ENCODE measurements at regions of chr14 and their contacts with region 1.

Region 1: DNA sequence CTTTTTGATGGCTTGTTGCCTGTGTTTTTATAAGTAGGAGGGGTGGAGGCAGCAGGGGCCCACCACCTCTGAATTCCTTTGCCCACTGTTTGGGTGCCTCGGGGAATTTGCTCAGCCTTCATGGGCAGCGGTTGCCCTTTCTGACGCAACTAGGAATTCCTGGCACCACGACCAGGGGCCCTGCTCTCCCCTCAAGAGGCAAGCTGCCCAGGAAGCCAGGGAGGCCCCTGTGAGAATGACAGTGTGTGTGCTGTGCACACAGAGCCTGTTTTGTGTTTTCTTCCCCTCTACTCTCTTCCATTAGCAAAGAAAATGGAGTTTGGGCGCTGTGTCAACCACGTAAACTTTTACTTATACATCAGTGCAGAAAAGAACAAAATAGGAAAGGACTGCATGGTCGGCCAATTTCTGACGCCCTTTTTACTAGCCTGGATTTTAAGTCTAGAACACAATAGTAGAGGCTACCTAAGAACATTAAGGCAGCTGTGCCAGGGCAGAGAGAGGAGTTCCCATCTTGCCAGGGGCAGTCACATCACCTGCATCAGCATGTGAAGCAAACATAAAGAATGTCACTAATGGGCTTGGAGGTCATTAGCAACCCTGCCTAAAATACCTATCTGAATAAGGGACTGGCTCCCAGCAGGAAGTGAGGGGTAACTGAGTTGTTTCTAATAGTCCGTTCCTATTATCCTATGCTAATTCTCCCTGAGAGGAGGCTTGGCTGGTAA is 17.9 kb upstream of the PTGR2 start:
- DNase-seq: no peak
- H3K4me3 ChIP-seq: no peak overlapping the region
- H3K4me3 Mint-ChIP-seq: no peak overlapping the region
- H3K27ac Mint-ChIP-seq: no peak overlapping the region
- H3K4me1 ChIP-seq: peaks cover 38% of the 10 kb centered on the region
- H3K4me1 Mint-ChIP-seq: peaks cover 17% of the 10 kb centered on the region
- H3K27me3 ChIP-seq: no peaks in the 10 kb centered on the region
- H3K27me3 Mint-ChIP-seq: no peaks in the 10 kb centered on the region
- CTCF ChIP-seq: no peak

Region 2: DNA sequence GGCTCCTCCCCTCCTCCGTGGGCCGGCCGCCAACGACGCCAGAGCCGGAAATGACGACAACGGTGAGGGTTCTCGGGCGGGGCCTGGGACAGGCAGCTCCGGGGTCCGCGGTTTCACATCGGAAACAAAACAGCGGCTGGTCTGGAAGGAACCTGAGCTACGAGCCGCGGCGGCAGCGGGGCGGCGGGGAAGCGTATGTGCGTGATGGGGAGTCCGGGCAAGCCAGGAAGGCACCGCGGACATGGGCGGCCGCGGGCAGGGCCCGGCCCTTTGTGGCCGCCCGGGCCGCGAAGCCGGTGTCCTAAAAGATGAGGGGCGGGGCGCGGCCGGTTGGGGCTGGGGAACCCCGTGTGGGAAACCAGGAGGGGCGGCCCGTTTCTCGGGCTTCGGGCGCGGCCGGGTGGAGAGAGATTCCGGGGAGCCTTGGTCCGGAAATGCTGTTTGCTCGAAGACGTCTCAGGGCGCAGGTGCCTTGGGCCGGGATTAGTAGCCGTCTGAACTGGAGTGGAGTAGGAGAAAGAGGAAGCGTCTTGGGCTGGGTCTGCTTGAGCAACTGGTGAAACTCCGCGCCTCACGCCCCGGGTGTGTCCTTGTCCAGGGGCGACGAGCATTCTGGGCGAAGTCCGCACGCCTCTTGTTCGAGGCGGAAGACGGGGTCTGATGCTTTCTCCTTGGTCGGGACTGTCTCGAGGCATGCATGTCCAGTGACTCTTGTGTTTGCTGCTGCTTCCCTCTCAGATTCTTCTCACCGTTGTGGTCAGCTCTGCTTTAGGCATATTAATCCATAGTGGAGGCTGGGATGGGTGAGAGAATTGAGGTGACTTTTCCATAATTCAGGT is 697.1 kb before region 1 on chr14 and contains the start of gene PSEN1:
- CTCF ChIA-PET with region 1: no interaction called
- POLR2A ChIA-PET with region 1: no interaction called
- intact Hi-C with region 1: no loop called
- DNase-seq: peak; percentile 96 to 98
- H3K4me3 ChIP-seq: peak within 1 kb of the TSS; percentile 82
- H3K4me3 Mint-ChIP-seq: peak within 1 kb of the TSS; percentile 74
- H3K27ac Mint-ChIP-seq: peak within 1 kb of the TSS; percentile 78
- H3K4me1 ChIP-seq: no peaks in the 10 kb centered on the region
- H3K4me1 Mint-ChIP-seq: peaks cover 8% of the 10 kb centered on the region
- H3K27me3 ChIP-seq: no peaks in the 10 kb centered on the region
- H3K27me3 Mint-ChIP-seq: no peaks in the 10 kb centered on the region
- CTCF ChIP-seq: no peak
- total RNA-seq, gene PSEN1: 74.8 and 76.8 TPM in 2 replicates

Region 3: DNA sequence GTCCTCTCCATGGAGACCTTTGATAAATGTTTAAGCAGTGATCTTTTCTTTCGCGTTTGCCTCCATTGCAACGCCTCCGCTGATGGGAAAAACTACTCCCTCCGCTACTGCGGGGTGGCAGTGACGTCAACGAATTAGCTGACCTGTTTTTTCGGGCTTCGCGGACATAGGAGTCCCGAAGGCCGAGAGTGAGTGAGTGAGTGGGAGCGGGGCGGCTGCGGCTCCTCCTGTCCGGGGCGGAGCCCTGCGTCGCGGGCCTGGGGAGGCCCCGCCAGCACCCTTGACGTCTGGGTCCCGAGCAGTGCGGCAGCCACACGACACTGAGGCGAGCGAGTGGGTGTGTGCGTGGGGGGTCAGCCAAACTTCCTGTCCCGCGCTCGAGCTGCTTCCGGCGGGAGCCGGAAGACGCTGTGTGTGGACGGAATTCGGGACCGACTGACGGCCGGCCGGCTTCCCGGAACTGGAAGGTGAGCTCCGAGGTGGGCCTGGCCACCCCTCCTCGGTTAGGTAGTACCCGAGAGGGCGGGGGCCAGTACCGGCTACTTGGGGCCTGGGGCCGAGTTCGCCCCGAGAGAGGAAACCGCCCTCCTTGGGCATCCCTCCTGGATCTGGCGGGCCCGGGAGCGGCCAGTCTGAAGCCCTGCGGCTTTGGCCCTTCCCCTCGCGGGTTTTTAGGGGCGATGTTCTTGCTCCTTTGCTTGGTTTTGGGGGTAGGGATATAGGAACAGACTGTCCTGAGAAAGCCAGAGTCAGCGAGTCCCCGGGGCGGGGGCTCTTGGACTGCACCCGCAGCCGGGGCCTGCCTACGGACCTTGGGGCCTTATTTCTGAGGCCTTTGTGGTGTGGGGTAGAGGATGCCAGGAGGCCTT is 53.0 kb after region 1 on chr14 and contains the start of gene ZNF410:
- CTCF ChIA-PET with region 1: no interaction called
- POLR2A ChIA-PET with region 1: interaction called, 8 read pairs
- intact Hi-C with region 1: loop called (anchors 5 kb)
- DNase-seq: peak; percentile 94 to 95
- H3K4me3 ChIP-seq: peak within 1 kb of the TSS; percentile 69
- H3K4me3 Mint-ChIP-seq: peak within 1 kb of the TSS; percentile 96
- H3K27ac Mint-ChIP-seq: peak within 1 kb of the TSS; percentile 98
- H3K4me1 ChIP-seq: peaks cover 17% of the 10 kb centered on the region
- H3K4me1 Mint-ChIP-seq: peaks cover 26% of the 10 kb centered on the region
- H3K27me3 ChIP-seq: no peaks in the 10 kb centered on the region
- H3K27me3 Mint-ChIP-seq: no peaks in the 10 kb centered on the region
- CTCF ChIP-seq: no peak
- total RNA-seq, gene ZNF410: 35.9 and 36.8 TPM in 2 replicates